ENCODE measurements at regions of chr3 and their contacts with region 1.

Region 1: DNA sequence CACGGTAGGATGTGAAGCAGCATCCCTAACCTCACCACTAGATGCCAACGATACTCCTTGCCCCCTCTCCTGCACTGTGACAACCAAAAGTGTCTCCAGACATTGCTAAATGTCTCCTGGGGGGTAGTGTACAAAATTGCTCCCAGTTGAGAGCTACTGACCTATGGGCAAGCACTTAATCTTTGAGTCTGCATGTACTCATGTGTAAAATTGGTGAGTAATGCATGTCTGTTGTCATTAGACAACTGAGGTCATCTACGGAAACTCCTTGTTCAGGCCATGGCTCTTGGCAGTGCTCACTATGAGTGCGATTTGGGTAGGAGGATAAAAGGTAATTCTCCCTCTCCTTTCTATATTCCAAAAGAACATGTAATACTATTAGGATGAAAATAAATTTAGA is 29.2 kb downstream of the PDHB start:
- DNase-seq: no peak
- ATAC-seq: no peak
- H3K4me3 ChIP-seq: no peak overlapping the region
- H3K4me3 Mint-ChIP-seq: no peak overlapping the region
- H3K27ac ChIP-seq: peak overlapping the region in 1 of 2 donors; percentile 54
- H3K27ac Mint-ChIP-seq: peak overlapping the region; percentile 73
- H3K4me1 ChIP-seq: peaks cover 6 to 25% of the 10 kb centered on the region in 2 donors
- H3K4me1 Mint-ChIP-seq: peaks cover 44% of the 10 kb centered on the region
- H3K27me3 ChIP-seq: no peaks in the 10 kb centered on the region
- H3K27me3 Mint-ChIP-seq: no peaks in the 10 kb centered on the region
- CTCF ChIP-seq: no peak

Region 2: DNA sequence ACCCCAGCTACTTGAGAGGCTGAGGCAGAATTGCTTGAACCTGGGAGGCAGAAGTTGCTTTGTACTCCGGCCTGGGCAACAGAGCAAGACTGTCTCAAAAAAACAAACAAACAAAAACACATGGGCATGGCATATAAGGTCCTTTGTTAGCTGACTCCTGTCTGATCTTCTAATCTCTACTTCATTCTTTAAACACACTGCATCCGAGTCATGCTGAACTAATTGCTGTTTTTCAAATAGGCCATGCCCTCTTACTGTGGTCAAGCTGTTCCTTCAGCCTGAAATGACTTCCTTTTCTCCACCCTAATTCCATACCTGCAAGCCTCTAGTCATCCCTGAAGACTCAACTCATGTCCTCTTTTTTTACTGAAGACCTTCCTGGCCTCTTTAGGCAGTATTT is 670.6 kb before region 1 on chr3:
- CTCF ChIA-PET with region 1: no interaction called
- POLR2A ChIA-PET with region 1: no interaction called
- intact Hi-C with region 1: no loop called
- DNase-seq: no peak
- ATAC-seq: no peak
- H3K4me3 ChIP-seq: no peak overlapping the region
- H3K4me3 Mint-ChIP-seq: no peak overlapping the region
- H3K27ac ChIP-seq: no peak overlapping the region
- H3K27ac Mint-ChIP-seq: no peak overlapping the region
- H3K4me1 ChIP-seq: no peaks in the 10 kb centered on the region
- H3K4me1 Mint-ChIP-seq: no peaks in the 10 kb centered on the region
- H3K27me3 ChIP-seq: no peaks in the 10 kb centered on the region
- H3K27me3 Mint-ChIP-seq: no peaks in the 10 kb centered on the region
- CTCF ChIP-seq: no peak

Region 3: GRCh38 chr3:58332575-58333188 is 71.7 kb before region 1 on chr3 and contains the start of gene PXK:
- CTCF ChIA-PET with region 1: interaction called, 66 read pairs
- POLR2A ChIA-PET with region 1: interaction called, 3 read pairs
- intact Hi-C with region 1: no loop called
- DNase-seq: peak; percentile 86
- ATAC-seq: peak; percentile 76
- H3K4me3 ChIP-seq: peak within 1 kb of the TSS; percentile 72 to 90 (median 87)
- H3K4me3 Mint-ChIP-seq: peak within 1 kb of the TSS; percentile 100
- H3K27ac ChIP-seq: peak within 1 kb of the TSS; percentile 9 to 75
- H3K27ac Mint-ChIP-seq: peak within 1 kb of the TSS; percentile 100
- H3K4me1 ChIP-seq: peaks cover 34 to 41% of the 10 kb centered on the region in 2 donors
- H3K4me1 Mint-ChIP-seq: peaks cover 50% of the 10 kb centered on the region
- H3K27me3 ChIP-seq: no peaks in the 10 kb centered on the region
- H3K27me3 Mint-ChIP-seq: no peaks in the 10 kb centered on the region
- CTCF ChIP-seq: no peak
- total RNA-seq, gene PXK: 104 and 109 TPM in 2 replicates

Region 4: GRCh38 chr3:58349792-58350626 is 54.4 kb before region 1 on chr3:
- CTCF ChIA-PET with region 1: interaction called, 12 read pairs
- POLR2A ChIA-PET with region 1: interaction called, 6 read pairs
- intact Hi-C with region 1: loop called (anchors 5 kb)
- DNase-seq: peak; percentile 84
- ATAC-seq: peak; percentile 78
- H3K4me3 ChIP-seq: peak overlapping the region; percentile 2 to 58 (median 31)
- H3K4me3 Mint-ChIP-seq: peak overlapping the region; percentile 66
- H3K27ac ChIP-seq: peak overlapping the region; percentile 80 to 97
- H3K27ac Mint-ChIP-seq: peak overlapping the region; percentile 100
- H3K4me1 ChIP-seq: peaks cover 90 to 98% of the 10 kb centered on the region in 2 donors
- H3K4me1 Mint-ChIP-seq: peaks cover 87% of the 10 kb centered on the region
- H3K27me3 ChIP-seq: no peaks in the 10 kb centered on the region
- H3K27me3 Mint-ChIP-seq: no peaks in the 10 kb centered on the region
- CTCF ChIP-seq: no peak

Region 5: GRCh38 chr3:58375254-58375653 is 29.1 kb before region 1 on chr3:
- CTCF ChIA-PET with region 1: no interaction called
- POLR2A ChIA-PET with region 1: no interaction called
- intact Hi-C with region 1: no loop called
- DNase-seq: no peak
- ATAC-seq: no peak
- H3K4me3 ChIP-seq: no peak overlapping the region
- H3K4me3 Mint-ChIP-seq: no peak overlapping the region
- H3K27ac ChIP-seq: peak overlapping the region in 1 of 2 donors; percentile 40
- H3K27ac Mint-ChIP-seq: no peak overlapping the region
- H3K4me1 ChIP-seq: peaks cover 3 to 17% of the 10 kb centered on the region in 2 donors
- H3K4me1 Mint-ChIP-seq: peaks cover 26% of the 10 kb centered on the region
- H3K27me3 ChIP-seq: no peaks in the 10 kb centered on the region
- H3K27me3 Mint-ChIP-seq: no peaks in the 10 kb centered on the region
- CTCF ChIP-seq: no peak

Measured in B cell (primary cell).